ENCODE measurements at regions of chr14 and their contacts with region 1.

Region 1: GRCh38 chr14:106556665-106557289 is 1030.4 kb downstream of the TMEM121 start:
- DNase-seq: peak; percentile 90
- ATAC-seq: peak; percentile 49
- H3K4me3 Mint-ChIP-seq: no peak overlapping the region
- H3K27ac Mint-ChIP-seq: no peak overlapping the region
- H3K4me1 Mint-ChIP-seq: no peaks in the 10 kb centered on the region
- H3K27me3 Mint-ChIP-seq: peaks cover 13% of the 10 kb centered on the region

Region 2: GRCh38 chr14:105581551-105582341 is 975.0 kb before region 1 on chr14:
- CTCF ChIA-PET with region 1: no interaction called
- POLR2A ChIA-PET with region 1: no interaction called
- intact Hi-C with region 1: no loop called
- DNase-seq: no peak
- ATAC-seq: no peak
- H3K4me3 Mint-ChIP-seq: no peak overlapping the region
- H3K27ac Mint-ChIP-seq: no peak overlapping the region
- H3K4me1 Mint-ChIP-seq: no peaks in the 10 kb centered on the region
- H3K27me3 Mint-ChIP-seq: no peaks in the 10 kb centered on the region

Region 3: DNA sequence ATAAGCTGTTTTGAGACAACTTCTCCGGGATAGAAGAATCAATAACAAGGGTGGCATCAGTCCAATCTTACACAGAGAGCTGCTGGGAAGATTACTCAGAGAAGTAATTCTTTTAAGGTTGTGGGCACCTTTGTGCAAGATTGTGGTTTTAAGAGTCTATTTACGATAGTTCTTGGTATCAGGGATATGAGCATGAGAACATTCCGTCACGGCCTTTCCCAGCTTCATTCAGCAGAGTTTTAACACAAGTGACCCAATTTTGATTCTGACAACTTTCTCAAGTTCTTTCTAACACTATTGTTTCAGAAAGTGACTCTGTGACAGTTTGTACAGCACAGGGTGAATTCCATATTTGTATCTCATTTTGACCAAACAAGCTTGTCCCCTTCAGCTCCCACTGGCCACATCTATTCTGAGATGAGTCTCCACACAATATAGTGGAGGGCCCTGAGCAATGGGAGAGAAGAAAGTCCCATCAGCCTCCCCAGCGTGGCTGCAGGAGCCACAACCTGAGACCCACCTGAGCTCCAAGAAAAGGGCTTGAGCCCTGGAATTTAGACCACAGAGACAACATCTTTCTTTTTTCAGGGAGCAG is 161.2 kb before region 1 on chr14:
- CTCF ChIA-PET with region 1: no interaction called
- POLR2A ChIA-PET with region 1: no interaction called
- intact Hi-C with region 1: no loop called
- DNase-seq: peak; percentile 67
- ATAC-seq: peak; percentile 80
- H3K4me3 Mint-ChIP-seq: peak overlapping the region; percentile 55
- H3K27ac Mint-ChIP-seq: peak overlapping the region; percentile 93
- H3K4me1 Mint-ChIP-seq: peaks cover 31% of the 10 kb centered on the region
- H3K27me3 Mint-ChIP-seq: peaks cover 11% of the 10 kb centered on the region

Region 4: GRCh38 chr14:106538201-106538600 is 18.6 kb before region 1 on chr14:
- CTCF ChIA-PET with region 1: interaction called, 25 read pairs
- POLR2A ChIA-PET with region 1: no interaction called
- intact Hi-C with region 1: no loop called
- DNase-seq: no peak
- ATAC-seq: no peak
- H3K4me3 Mint-ChIP-seq: no peak overlapping the region
- H3K27ac Mint-ChIP-seq: no peak overlapping the region
- H3K4me1 Mint-ChIP-seq: peaks cover 6% of the 10 kb centered on the region
- H3K27me3 Mint-ChIP-seq: peaks cover 17% of the 10 kb centered on the region